Heart right ventricle (tissue), 16 donors: ENCODE measurements at regions of chr12 and their contacts with region 1.

Region 1: GRCh38 chr12:6069437-6070107 is 54.9 kb downstream of the VWF start:
- DNase-seq: no peak
- ATAC-seq: peak in 2 of 8 donors; percentile 18 to 39
- H3K4me3 ChIP-seq: no peak overlapping the region
- H3K27ac ChIP-seq: peak overlapping the region in 3 of 10 donors; percentile 46 to 86 (median 82)
- H3K4me1 ChIP-seq: peaks cover 0 to 79% (median 22%) of the 10 kb centered on the region in 9 donors
- H3K27me3 ChIP-seq: peaks cover 0 to 18% (median 0%) of the 10 kb centered on the region in 7 donors
- CTCF ChIP-seq: no peak

Region 2: GRCh38 chr12:6116175-6117021 is 46.8 kb after region 1 on chr12:
- intact Hi-C with region 1: loop called in 3 of 10 experiments (anchors 5 kb)
- DNase-seq: peak; percentile 47 to 60
- ATAC-seq: peak; percentile 42 to 73 (median 64)
- H3K4me3 ChIP-seq: peak overlapping the region in 4 of 10 donors; percentile 8 to 20 (median 16)
- H3K27ac ChIP-seq: peak overlapping the region; percentile 54 to 91 (median 89)
- H3K4me1 ChIP-seq: peaks cover 3 to 75% (median 23%) of the 10 kb centered on the region in 9 donors
- H3K27me3 ChIP-seq: peaks cover 0 to 4% (median 0%) of the 10 kb centered on the region in 7 donors
- CTCF ChIP-seq: no peak

Region 3: GRCh38 chr12:6124411-6125309 is 55.1 kb after region 1 on chr12 and contains the start of gene VWF:
- intact Hi-C with region 1: loop called in 3 of 10 experiments (anchors 5 kb)
- DNase-seq: peak in 1 of 2 donors; percentile 77
- ATAC-seq: peak; percentile 65 to 84 (median 78)
- H3K4me3 ChIP-seq: peak within 1 kb of the TSS; percentile 38 to 64 (median 51)
- H3K27ac ChIP-seq: peak within 1 kb of the TSS; percentile 84 to 91 (median 89)
- H3K4me1 ChIP-seq: peaks cover 0 to 22% (median 4%) of the 10 kb centered on the region in 9 donors
- H3K27me3 ChIP-seq: peaks cover 0 to 7% (median 0%) of the 10 kb centered on the region in 7 donors
- CTCF ChIP-seq: no peak
- total RNA-seq, gene VWF: 163 to 480 (median 275) TPM

Region 4: GRCh38 chr12:6167327-6168259 is 98.0 kb after region 1 on chr12:
- intact Hi-C with region 1: loop called in 4 of 10 experiments (anchors 5 to 10 kb)
- DNase-seq: peak in 1 of 2 donors; percentile 80
- ATAC-seq: peak; percentile 53 to 92 (median 78)
- H3K4me3 ChIP-seq: no peak overlapping the region
- H3K27ac ChIP-seq: peak overlapping the region; percentile 3 to 90 (median 78)
- H3K4me1 ChIP-seq: peaks cover 12 to 55% (median 39%) of the 10 kb centered on the region in 9 donors
- H3K27me3 ChIP-seq: no peaks in the 10 kb centered on the region
- CTCF ChIP-seq: no peak

Region 5: DNA sequence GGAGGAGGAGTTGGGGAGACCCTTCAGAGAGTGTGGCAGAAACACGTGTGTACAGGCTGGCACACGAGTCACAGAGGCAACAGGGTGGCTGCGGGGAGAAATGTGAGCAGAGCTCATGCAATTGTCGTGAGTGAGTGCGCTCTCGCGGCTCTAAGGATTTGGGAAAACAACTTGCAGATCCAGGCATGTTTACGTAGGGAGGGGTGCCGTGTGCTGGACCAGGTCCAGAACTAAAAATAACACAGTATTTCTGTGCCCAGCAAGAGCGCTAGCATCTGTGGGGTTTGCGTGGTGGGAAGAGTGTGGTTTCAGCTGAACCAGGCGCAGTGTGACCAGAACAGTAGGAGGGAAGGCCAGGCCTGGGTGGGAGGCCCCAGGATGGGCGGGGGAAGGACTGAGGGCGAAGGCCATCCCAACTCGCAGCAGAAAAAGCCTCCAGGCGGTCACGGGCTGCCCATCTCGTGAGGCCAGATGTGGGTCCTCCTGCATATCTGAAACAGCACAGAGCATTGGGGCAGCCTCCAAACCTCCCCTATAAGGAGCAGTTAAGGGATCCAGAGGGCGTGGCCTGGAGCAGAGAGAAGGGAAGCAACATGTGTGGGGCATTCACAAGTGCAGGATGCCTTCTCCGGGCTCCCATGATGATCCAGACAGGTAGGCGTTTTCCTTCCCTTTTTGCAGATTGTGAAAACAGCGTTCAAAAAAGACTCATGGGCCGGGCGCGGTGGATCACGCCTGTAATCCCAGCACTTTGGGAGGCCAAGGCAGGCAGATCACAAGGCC is 112.7 kb after region 1 on chr12:
- intact Hi-C with region 1: loop called in 5 of 10 experiments (anchors 5 to 10 kb)
- DNase-seq: peak; percentile 59 to 69
- ATAC-seq: peak; percentile 46 to 79 (median 76)
- H3K4me3 ChIP-seq: peak overlapping the region in 2 of 10 donors; percentile 6 to 21
- H3K27ac ChIP-seq: peak overlapping the region; percentile 50 to 80 (median 66)
- H3K4me1 ChIP-seq: peaks cover 21 to 69% (median 44%) of the 10 kb centered on the region in 9 donors
- H3K27me3 ChIP-seq: no peaks in the 10 kb centered on the region
- CTCF ChIP-seq: no peak

Region 6: GRCh38 chr12:6195665-6196535 is 126.3 kb after region 1 on chr12:
- intact Hi-C with region 1: loop called in 6 of 10 experiments (anchors 5 kb)
- DNase-seq: peak; percentile 83 to 93
- ATAC-seq: peak; percentile 72 to 87 (median 82)
- H3K4me3 ChIP-seq: no peak overlapping the region
- H3K27ac ChIP-seq: peak overlapping the region in 9 of 10 donors; percentile 27 to 83 (median 74)
- H3K4me1 ChIP-seq: peaks cover 0 to 39% (median 18%) of the 10 kb centered on the region in 9 donors
- H3K27me3 ChIP-seq: peaks cover 0 to 30% (median 0%) of the 10 kb centered on the region in 7 donors
- CTCF ChIP-seq: peak; percentile 88 to 98 (median 94)

Region 7: GRCh38 chr12:6278439-6279255 is 209.1 kb after region 1 on chr12:
- intact Hi-C with region 1: loop called in 6 of 10 experiments (anchors 2 to 5 kb)
- DNase-seq: peak; percentile 82 to 88
- ATAC-seq: peak; percentile 76 to 96 (median 89)
- H3K4me3 ChIP-seq: peak overlapping the region; percentile 9 to 68 (median 60)
- H3K27ac ChIP-seq: peak overlapping the region; percentile 66 to 93 (median 88)
- H3K4me1 ChIP-seq: peaks cover 14 to 48% (median 37%) of the 10 kb centered on the region in 9 donors
- H3K27me3 ChIP-seq: peaks cover 0 to 17% (median 0%) of the 10 kb centered on the region in 7 donors
- CTCF ChIP-seq: peak; percentile 68 to 100 (median 94)

Region 8: GRCh38 chr12:6662906-6663742 is 593.6 kb after region 1 on chr12 and contains the start of gene ING4:
- intact Hi-C with region 1: no loop called
- DNase-seq: peak; percentile 94 to 99
- ATAC-seq: peak; percentile 99 to 100 (median 100)
- H3K4me3 ChIP-seq: peak within 1 kb of the TSS; percentile 62 to 92 (median 82)
- H3K27ac ChIP-seq: peak within 1 kb of the TSS; percentile 5 to 88 (median 78)
- H3K4me1 ChIP-seq: peaks cover 0 to 32% (median 15%) of the 10 kb centered on the region in 9 donors
- H3K27me3 ChIP-seq: no peaks in the 10 kb centered on the region
- CTCF ChIP-seq: no peak
- total RNA-seq, gene ING4: 17.7 to 32.5 (median 22.6) TPM

Region 9: GRCh38 chr12:7210642-7211151 is 1141.1 kb after region 1 on chr12:
- intact Hi-C with region 1: no loop called
- DNase-seq: no peak
- ATAC-seq: peak in 1 of 8 donors; percentile 42
- H3K4me3 ChIP-seq: no peak overlapping the region
- H3K27ac ChIP-seq: no peak overlapping the region
- H3K4me1 ChIP-seq: no peaks in the 10 kb centered on the region
- H3K27me3 ChIP-seq: peaks cover 0 to 2% (median 0%) of the 10 kb centered on the region in 7 donors
- CTCF ChIP-seq: no peak